ENCODE measurements at regions of chr13 and their contacts with region 1.

Region 1: GRCh38 chr13:35881360-35881759 is 249.8 kb downstream of the DCLK1 start:
- DNase-seq: peak in 9 of 10 donors; percentile 49 to 87 (median 72)
- H3K4me3 ChIP-seq: no peak overlapping the region
- H3K27ac ChIP-seq: peak overlapping the region in 58 of 59 donors; percentile 39 to 91 (median 79)
- H3K27me3 ChIP-seq: no peaks in the 10 kb centered on the region
- CTCF ChIP-seq: peak in 4 of 56 donors; percentile 1 to 24 (median 18)

Region 2: GRCh38 chr13:35841060-35841521 is 40.3 kb before region 1 on chr13:
- intact Hi-C with region 1: loop called (anchors 5 kb)
- DNase-seq: peak in 4 of 10 donors; percentile 25 to 76 (median 69)
- H3K4me3 ChIP-seq: peak overlapping the region in 11 of 59 donors; percentile 2 to 35 (median 20)
- H3K27ac ChIP-seq: peak overlapping the region; percentile 35 to 97 (median 88)
- H3K27me3 ChIP-seq: no peaks in the 10 kb centered on the region
- CTCF ChIP-seq: peak in 42 of 56 donors; percentile 15 to 65 (median 34)

Region 3: GRCh38 chr13:35927567-35928021 is 46.2 kb after region 1 on chr13:
- intact Hi-C with region 1: no loop called
- DNase-seq: no peak
- H3K4me3 ChIP-seq: no peak overlapping the region
- H3K27ac ChIP-seq: no peak overlapping the region
- H3K27me3 ChIP-seq: no peaks in the 10 kb centered on the region
- CTCF ChIP-seq: no peak

Measured in dorsolateral prefrontal cortex (tissue), 120 donors.